IMR-90 (cell line): ENCODE measurements at regions of chr15 and their contacts with region 1.

Region 1: DNA sequence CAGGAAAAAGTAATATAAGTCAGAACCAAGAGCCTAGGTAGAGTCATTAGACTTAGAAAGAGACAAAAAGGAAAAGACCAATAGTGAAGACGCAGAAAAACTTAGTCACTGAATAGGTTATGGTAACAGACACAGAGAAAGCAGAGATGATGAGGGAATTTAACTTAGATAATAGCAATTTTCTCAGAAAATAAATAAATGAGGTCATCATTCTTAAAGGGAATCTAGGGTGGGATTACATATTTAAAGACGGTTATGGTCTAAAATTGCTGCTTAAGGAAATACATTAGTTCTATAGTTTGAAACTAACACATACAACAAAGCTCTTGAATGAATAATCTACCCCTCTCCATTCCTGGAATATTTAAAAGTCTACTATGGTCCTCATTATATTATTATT is 59.4 kb downstream of the UBR1 start:
- DNase-seq: no peak
- ATAC-seq: no peak
- H3K4me3 ChIP-seq: no peak overlapping the region
- H3K27ac ChIP-seq: no peak overlapping the region
- H3K4me1 ChIP-seq: no peaks in the 10 kb centered on the region
- H3K27me3 ChIP-seq: no peaks in the 10 kb centered on the region
- CTCF ChIP-seq: no peak
- POLR2A ChIP-seq: no peak
- RAD21 ChIP-seq: no peak

Region 2: DNA sequence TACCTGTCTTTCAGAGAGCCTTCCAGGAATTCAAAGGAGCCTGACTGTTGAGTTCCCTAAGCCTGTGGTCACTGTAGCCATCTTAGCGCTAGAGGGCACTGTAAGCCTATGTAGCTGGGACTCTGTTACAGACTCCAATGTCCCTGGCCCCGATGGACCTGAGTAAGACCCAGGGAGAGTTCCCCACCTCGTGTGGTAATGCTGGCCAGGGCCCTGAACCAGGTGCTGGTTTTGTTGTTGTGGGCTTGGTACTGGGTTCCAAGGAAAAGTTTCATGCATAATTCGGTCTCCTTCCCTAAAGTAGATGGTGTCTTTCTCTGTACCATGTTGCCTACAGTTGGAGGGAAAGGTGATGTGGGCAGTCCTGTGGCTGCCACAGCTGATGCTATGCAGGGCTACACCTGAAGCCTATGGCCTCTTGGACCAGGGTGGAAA is 342.0 kb before region 1 on chr15:
- CTCF ChIA-PET with region 1: no interaction called
- POLR2A ChIA-PET with region 1: no interaction called
- dilution Hi-C with region 1: no loop called
- in situ Hi-C with region 1: no loop called
- intact Hi-C with region 1: loop called (anchors 1 kb)
- DNase-seq: peak; percentile 73
- ATAC-seq: peak; percentile 100
- H3K4me3 ChIP-seq: no peak overlapping the region
- H3K27ac ChIP-seq: no peak overlapping the region
- H3K4me1 ChIP-seq: no peaks in the 10 kb centered on the region
- H3K27me3 ChIP-seq: no peaks in the 10 kb centered on the region
- CTCF ChIP-seq: peak; percentile 86
- POLR2A ChIP-seq: no peak
- RAD21 ChIP-seq: peak; percentile 94

Region 3: DNA sequence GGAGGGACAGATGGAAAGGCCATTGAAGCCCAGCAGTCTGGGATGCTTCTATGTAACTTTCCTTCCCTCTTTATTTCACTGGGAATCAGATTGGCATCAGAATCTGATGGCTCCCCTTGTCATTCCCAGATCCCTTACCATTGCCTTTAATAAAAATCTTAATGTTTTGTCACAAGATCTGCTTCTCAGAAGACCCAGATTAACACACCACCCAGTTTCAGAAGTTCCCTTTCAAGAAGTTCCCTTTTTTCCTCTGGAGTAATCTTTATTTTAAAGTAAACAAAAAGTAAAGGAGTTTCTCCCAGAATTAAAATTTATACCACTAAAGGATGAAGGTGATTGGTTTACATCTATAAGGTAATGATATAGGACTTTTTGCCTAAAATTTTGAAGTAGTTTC is 17.0 kb before region 1 on chr15:
- CTCF ChIA-PET with region 1: no interaction called
- POLR2A ChIA-PET with region 1: no interaction called
- dilution Hi-C with region 1: no loop called
- in situ Hi-C with region 1: no loop called
- intact Hi-C with region 1: no loop called
- DNase-seq: no peak
- ATAC-seq: no peak
- H3K4me3 ChIP-seq: no peak overlapping the region
- H3K27ac ChIP-seq: no peak overlapping the region
- H3K4me1 ChIP-seq: no peaks in the 10 kb centered on the region
- H3K27me3 ChIP-seq: no peaks in the 10 kb centered on the region
- CTCF ChIP-seq: no peak
- POLR2A ChIP-seq: no peak
- RAD21 ChIP-seq: no peak

Region 4: DNA sequence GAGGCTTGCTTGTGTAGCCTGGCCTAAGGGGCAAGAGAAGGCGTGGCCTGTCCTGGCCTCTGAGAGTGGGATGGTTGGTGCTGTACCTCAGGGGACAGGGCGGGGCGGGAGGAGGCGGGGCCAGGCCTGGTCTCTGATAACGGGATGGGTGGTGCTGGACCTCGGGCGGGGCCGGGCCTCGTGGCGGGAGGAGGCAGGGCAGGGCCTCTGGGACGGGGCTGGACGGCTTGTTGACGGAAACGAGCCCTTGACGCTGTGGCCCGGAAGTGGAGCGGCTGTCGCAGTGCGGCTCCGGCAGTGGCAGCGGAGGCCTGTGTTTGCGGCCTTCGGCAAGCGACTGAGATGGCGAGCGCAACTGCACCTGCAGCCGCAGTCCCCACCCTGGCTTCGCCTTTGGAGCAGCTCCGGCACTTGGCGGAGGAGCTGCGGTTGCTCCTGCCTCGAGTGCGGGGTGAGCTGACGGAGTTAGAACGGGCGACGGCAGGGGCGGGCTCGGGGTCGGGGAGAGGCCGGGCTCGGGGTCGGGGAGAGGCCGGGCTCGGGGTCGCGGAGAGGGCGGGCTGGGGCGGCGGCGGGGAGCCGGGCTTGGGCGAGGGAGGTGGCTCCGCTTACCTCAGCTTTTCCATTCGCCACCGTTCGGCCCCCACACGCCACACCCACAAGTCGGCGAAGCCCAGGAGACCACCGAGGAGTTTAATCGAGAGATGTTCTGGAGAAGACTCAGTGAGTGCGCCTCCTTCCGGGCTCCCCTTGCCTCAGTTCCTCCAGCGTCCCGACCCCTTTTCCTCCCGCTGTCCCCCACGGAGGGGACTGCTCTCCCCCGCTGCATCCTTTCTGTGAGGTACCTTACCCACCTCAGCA is 138.9 kb after region 1 on chr15 and contains the start of gene CCNDBP1:
- CTCF ChIA-PET with region 1: no interaction called
- POLR2A ChIA-PET with region 1: no interaction called
- dilution Hi-C with region 1: no loop called
- in situ Hi-C with region 1: no loop called
- intact Hi-C with region 1: no loop called
- DNase-seq: peak; percentile 61
- ATAC-seq: peak; percentile 98
- H3K4me3 ChIP-seq: peak within 1 kb of the TSS; percentile 85
- H3K27ac ChIP-seq: peak within 1 kb of the TSS; percentile 53; the same call in 1 of the 2 replicates
- H3K4me1 ChIP-seq: no peaks in the 10 kb centered on the region
- H3K27me3 ChIP-seq: no peaks in the 10 kb centered on the region
- CTCF ChIP-seq: peak; percentile 36
- POLR2A ChIP-seq: no peak
- RAD21 ChIP-seq: peak; percentile 11; the same call in 1 of the 2 replicates
- total RNA-seq, gene CCNDBP1: 33.9 and 40.3 TPM in 2 replicates